Sigmoid colon (tissue), 7 donors: ENCODE measurements at regions of chr19 and their contacts with region 1.

Region 1: DNA sequence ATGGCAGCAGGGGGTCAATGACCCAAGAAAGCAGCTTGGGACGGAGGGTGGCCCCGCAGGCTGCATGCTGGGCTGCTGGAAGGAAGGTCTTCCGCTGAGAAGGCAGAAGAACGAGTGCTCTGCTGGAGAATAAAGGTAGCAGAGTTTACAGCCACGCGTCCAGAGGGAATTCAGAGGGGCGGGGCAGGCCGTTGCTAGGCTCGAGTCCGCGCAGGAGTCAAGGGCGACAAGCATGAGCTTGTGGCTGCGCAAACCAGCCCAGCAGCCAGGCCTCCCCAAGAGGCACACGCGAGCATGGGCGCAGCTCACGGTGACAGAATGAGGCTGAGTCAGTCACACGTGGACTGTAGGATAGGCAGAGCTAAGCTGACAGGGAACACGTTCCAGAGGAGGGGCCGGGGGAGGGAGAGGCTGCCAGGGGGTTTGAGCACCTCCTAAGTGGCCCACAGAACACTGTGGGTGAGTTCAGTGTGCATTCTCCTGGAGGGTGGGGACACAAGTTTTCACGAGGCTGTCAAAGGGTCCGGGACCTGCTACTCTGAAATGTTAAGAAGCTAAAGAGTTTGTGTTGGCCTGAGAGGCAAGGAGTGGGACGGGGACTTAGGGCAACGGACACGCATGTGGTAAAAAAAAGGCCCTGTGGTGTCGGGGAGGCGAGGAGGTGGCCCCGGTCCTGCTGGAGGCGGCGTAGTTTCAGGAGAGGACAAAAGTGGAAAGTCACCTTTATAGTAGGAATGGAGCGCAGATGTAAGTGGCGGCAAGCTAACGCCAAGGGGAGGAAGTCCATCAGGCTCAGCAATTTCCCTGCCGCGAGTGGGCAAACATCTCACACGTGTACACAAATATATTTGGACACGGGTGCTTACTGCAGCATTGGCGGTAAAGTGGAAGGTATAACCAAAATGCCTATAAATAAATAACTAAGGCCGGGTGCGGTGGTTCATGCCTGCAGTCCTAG is 17.7 kb downstream of the RFX2 start:
- DNase-seq: peak; percentile 93
- H3K4me3 ChIP-seq: peak overlapping the region in 3 of 4 donors; percentile 27 to 38 (median 34)
- H3K27ac ChIP-seq: peak overlapping the region; percentile 86 to 93 (median 90)
- H3K4me1 ChIP-seq: peaks cover 0 to 58% (median 54%) of the 10 kb centered on the region in 4 donors
- H3K27me3 ChIP-seq: no peaks in the 10 kb centered on the region
- CTCF ChIP-seq: peak in 2 of 4 experiments; percentile 25 to 30
- EP300 ChIP-seq: peak in 1 of 4 donors; percentile 12
- POLR2A ChIP-seq: peak; percentile 26 to 30

Region 2: GRCh38 chr19:5934774-5935472 is 157.7 kb before region 1 on chr19:
- intact Hi-C with region 1: no loop called
- DNase-seq: no peak
- H3K4me3 ChIP-seq: no peak overlapping the region
- H3K27ac ChIP-seq: peak overlapping the region; percentile 69 to 85 (median 77)
- H3K4me1 ChIP-seq: peaks cover 0 to 79% (median 65%) of the 10 kb centered on the region in 4 donors
- H3K27me3 ChIP-seq: no peaks in the 10 kb centered on the region
- CTCF ChIP-seq: no peak
- EP300 ChIP-seq: no peak
- POLR2A ChIP-seq: no peak

Region 3: GRCh38 chr19:6073858-6074708 is 18.5 kb before region 1 on chr19:
- intact Hi-C with region 1: loop called (anchors 2 kb)
- DNase-seq: no peak
- H3K4me3 ChIP-seq: no peak overlapping the region
- H3K27ac ChIP-seq: peak overlapping the region; percentile 78 to 91 (median 84)
- H3K4me1 ChIP-seq: peaks cover 0 to 64% (median 46%) of the 10 kb centered on the region in 4 donors
- H3K27me3 ChIP-seq: no peaks in the 10 kb centered on the region
- CTCF ChIP-seq: no peak
- EP300 ChIP-seq: no peak
- POLR2A ChIP-seq: no peak